GM13976 (cell line): ENCODE measurements at regions of chr1 and their contacts with region 1.

Region 1: DNA sequence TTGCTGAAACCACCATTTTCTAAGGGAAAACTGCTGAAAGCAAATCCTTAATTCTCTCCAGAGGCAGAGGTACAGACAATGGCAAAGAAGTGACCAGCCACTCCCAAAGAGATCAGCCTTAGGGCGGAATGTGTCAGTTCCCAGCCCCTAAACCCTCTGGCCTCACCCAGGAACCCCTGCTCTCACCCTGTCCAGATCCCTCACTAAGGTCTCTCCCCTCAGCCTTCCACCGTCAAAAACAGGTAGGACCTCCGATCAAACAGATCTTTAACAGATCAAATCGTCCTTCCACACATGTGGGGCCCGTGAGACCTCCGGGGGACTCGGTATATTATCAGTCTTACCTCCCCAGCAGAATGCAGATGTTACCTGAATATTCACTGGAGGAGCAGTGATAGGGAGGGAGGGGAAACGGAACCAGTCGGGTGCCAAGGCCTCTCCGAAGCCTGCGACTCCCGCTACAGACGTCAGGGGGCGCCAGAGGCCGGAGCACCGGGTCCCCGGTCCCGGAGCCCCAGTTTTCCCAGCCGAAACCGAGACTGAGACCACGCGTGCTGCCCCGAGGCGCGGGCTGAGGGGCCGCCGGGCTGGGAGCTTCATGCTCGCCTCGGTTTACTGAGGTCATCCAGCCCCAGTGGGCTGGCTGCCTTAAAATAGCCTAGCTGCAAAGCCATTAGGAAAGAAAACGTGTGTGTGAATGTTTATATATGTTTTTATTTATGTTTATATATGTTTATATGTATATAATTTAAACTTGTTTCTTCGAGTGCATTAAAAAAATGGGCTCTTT is 23.6 kb downstream of the GPA33 start:
- DNase-seq: peak; percentile 91
- CTCF ChIP-seq: peak; percentile 89

Region 2: GRCh38 chr1:167121375-167122120 is 55.0 kb after region 1 on chr1:
- in situ Hi-C with region 1: loop called (anchors 10 kb)
- DNase-seq: no peak
- CTCF ChIP-seq: no peak

Region 3: GRCh38 chr1:167165948-167166689 is 99.6 kb after region 1 on chr1:
- in situ Hi-C with region 1: no loop called
- DNase-seq: no peak
- CTCF ChIP-seq: no peak

Region 4: GRCh38 chr1:167196166-167196565 is 129.6 kb after region 1 on chr1:
- in situ Hi-C with region 1: no loop called
- DNase-seq: no peak
- CTCF ChIP-seq: no peak

Region 5: GRCh38 chr1:167442124-167442848 is 375.8 kb after region 1 on chr1:
- in situ Hi-C with region 1: loop called (anchors 10 kb)
- DNase-seq: peak; percentile 89
- CTCF ChIP-seq: peak; percentile 80

Region 6: DNA sequence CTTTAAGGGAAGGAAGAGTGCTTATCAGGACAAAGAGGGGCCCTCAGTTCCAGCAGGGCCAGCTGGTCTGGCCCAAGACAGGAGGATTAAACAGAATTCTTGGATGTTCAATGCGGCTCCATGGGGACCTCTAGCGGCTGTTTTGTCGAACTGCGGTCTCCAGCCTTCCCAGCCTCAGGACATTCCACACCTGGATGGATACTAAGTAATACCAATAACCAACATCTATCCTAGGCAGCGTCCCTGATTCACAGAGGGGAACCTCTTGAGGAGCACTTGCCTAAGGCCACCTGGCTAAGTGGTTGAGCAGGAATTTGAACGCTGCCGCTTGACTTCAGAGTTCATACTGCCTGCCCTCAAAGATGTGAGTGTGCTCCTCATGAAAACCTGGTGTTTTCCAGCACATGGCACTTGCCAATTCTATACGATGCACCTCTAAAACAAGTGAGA is 467.3 kb after region 1 on chr1:
- in situ Hi-C with region 1: loop called (anchors 10 kb)
- DNase-seq: peak; percentile 80
- CTCF ChIP-seq: peak; percentile 68